MCF 10A (cell line): ENCODE measurements at regions of chr9 and their contacts with region 1.

Region 1: GRCh38 chr9:4297151-4297785 is 2.6 kb downstream of the GLIS3 start:
- DNase-seq: peak; percentile 91
- H3K4me3 Mint-ChIP-seq: peak overlapping the region; percentile 94
- H3K27ac Mint-ChIP-seq: peak overlapping the region; percentile 97
- H3K4me1 Mint-ChIP-seq: peaks cover 37% of the 10 kb centered on the region
- H3K27me3 Mint-ChIP-seq: no peaks in the 10 kb centered on the region
- CTCF ChIP-seq: peak; percentile 39

Region 2: DNA sequence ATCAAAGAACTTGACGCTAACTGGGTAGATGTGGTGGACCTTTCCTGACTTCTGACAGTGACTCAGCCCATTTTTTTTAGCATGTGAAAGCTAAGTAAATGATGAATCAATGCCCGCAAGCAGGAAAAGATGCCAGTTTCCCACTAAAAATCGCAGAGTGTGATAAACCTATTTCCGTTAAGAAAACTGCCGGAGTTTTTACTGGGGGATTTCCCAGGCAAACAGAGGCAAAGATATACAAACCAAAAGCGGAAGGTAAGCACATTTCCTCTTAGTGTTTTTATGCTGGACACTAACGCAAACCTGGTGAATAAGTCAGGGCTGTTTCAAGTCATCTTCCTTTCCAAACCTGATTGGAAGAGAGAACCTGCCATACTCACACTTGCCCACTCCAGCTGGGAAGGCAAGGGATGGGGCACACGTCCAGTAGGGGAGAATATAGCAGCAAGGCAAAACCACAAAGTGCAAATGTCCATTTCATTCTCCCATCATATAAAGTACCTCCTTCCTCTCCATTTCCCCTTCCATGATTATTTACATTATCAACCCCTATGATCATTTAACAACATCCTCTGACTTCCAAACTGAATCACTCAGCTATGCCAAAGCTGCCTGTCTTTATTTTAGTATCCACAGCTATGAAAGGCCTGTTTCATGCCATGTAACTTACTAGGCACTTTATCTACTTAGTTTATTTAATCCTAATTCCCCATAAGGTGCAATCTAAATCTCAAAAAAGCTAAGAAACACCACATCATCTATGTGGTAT is 421.7 kb before region 1 on chr9:
- CTCF ChIA-PET with region 1: no interaction called
- POLR2A ChIA-PET with region 1: interaction called, 3 read pairs
- intact Hi-C with region 1: loop called (anchors 5 kb)
- DNase-seq: peak; percentile 93
- H3K4me3 Mint-ChIP-seq: no peak overlapping the region
- H3K27ac Mint-ChIP-seq: peak overlapping the region; percentile 78
- H3K4me1 Mint-ChIP-seq: peaks cover 22% of the 10 kb centered on the region
- H3K27me3 Mint-ChIP-seq: no peaks in the 10 kb centered on the region
- CTCF ChIP-seq: no peak

Region 3: GRCh38 chr9:4143936-4144717 is 153.1 kb before region 1 on chr9:
- CTCF ChIA-PET with region 1: no interaction called
- POLR2A ChIA-PET with region 1: no interaction called
- intact Hi-C with region 1: loop called (anchors 5 kb)
- DNase-seq: no peak
- H3K4me3 Mint-ChIP-seq: peak overlapping the region; percentile 15
- H3K27ac Mint-ChIP-seq: peak overlapping the region; percentile 1
- H3K4me1 Mint-ChIP-seq: peaks cover 22% of the 10 kb centered on the region
- H3K27me3 Mint-ChIP-seq: no peaks in the 10 kb centered on the region
- CTCF ChIP-seq: no peak

Region 4: GRCh38 chr9:4228606-4229005 is 68.7 kb before region 1 on chr9:
- CTCF ChIA-PET with region 1: interaction called, 4 read pairs
- POLR2A ChIA-PET with region 1: no interaction called
- intact Hi-C with region 1: loop called (anchors 2 kb)
- DNase-seq: peak; percentile 48
- H3K4me3 Mint-ChIP-seq: no peak overlapping the region
- H3K27ac Mint-ChIP-seq: peak overlapping the region; percentile 76
- H3K4me1 Mint-ChIP-seq: no peaks in the 10 kb centered on the region
- H3K27me3 Mint-ChIP-seq: no peaks in the 10 kb centered on the region
- CTCF ChIP-seq: peak; percentile 62

Region 5: DNA sequence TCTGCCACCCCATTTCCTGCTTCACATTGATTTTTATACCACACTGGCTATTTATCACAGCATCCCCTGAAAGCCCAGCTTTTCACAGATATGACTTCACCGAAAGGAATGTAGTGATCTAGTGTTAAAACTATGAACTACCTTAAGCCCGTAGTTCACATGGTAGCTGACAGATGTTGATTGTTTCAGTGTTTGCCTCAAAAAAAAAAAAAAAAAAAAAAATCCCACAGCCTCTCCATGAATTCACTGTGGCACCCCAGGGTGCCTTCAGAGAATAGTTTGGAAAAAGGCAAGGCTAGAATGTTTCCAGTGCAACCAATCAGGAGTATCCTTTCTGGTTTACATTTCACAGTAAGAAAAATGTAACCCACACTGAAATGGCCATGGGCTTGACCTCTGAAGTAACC is 34.5 kb before region 1 on chr9:
- CTCF ChIA-PET with region 1: interaction called, 3 read pairs
- POLR2A ChIA-PET with region 1: no interaction called
- intact Hi-C with region 1: loop called (anchors 5 kb)
- DNase-seq: peak; percentile 58
- H3K4me3 Mint-ChIP-seq: no peak overlapping the region
- H3K27ac Mint-ChIP-seq: peak overlapping the region; percentile 14
- H3K4me1 Mint-ChIP-seq: peaks cover 34% of the 10 kb centered on the region
- H3K27me3 Mint-ChIP-seq: no peaks in the 10 kb centered on the region
- CTCF ChIP-seq: no peak

Region 6: DNA sequence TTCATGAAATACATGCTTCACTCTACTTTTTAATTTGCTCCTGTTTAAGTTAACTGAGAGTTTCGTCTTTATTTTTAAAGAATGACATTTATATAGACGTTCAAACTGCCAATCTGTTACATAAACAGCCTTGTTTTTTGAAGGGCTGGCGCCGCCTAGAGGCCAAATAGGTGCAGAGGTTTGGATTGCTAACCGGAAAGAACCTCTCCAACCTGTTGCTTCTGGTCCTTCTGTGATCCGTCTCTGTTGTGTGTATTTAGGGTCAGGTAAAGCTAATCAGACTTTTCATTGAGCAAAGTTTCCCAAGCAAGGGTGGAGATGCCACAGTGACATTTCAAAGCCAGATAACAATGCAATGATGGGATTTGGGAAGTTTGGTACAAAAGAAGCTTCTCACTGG is 42.1 kb after region 1 on chr9:
- CTCF ChIA-PET with region 1: interaction called, 19 read pairs
- POLR2A ChIA-PET with region 1: interaction called, 3 read pairs
- intact Hi-C with region 1: loop called (anchors 5 kb)
- DNase-seq: peak; percentile 90
- H3K4me3 Mint-ChIP-seq: no peak overlapping the region
- H3K27ac Mint-ChIP-seq: no peak overlapping the region
- H3K4me1 Mint-ChIP-seq: peaks cover 10% of the 10 kb centered on the region
- H3K27me3 Mint-ChIP-seq: no peaks in the 10 kb centered on the region
- CTCF ChIP-seq: peak; percentile 92